Mammary epithelial cell (primary cell): ENCODE measurements at regions of chr22 and their contacts with region 1.

Region 1: GRCh38 chr22:36065775-36066559 is 37.3 kb upstream of the RBFOX2 start:
- DNase-seq: peak; percentile 85
- H3K4me3 ChIP-seq: peak overlapping the region; percentile 46 to 55 (median 49)
- H3K27ac ChIP-seq: peak overlapping the region; percentile 58
- H3K4me1 ChIP-seq: peaks cover 13% of the 10 kb centered on the region
- H3K27me3 ChIP-seq: no peaks in the 10 kb centered on the region
- CTCF ChIP-seq: peak in 1 of 2 donors; percentile 93

Region 2: GRCh38 chr22:35761037-35761436 is 304.9 kb before region 1 on chr22:
- CTCF ChIA-PET with region 1: interaction called, 36 read pairs
- dilution Hi-C with region 1: no loop called
- in situ Hi-C with region 1: no loop called
- intact Hi-C with region 1: no loop called
- DNase-seq: no peak
- H3K4me3 ChIP-seq: no peak overlapping the region
- H3K27ac ChIP-seq: no peak overlapping the region
- H3K4me1 ChIP-seq: no peaks in the 10 kb centered on the region
- H3K27me3 ChIP-seq: no peaks in the 10 kb centered on the region
- CTCF ChIP-seq: peak; percentile 8 to 31

Region 3: GRCh38 chr22:35930933-35931332 is 135.0 kb before region 1 on chr22:
- CTCF ChIA-PET with region 1: interaction called, 5 read pairs
- dilution Hi-C with region 1: no loop called
- in situ Hi-C with region 1: no loop called
- intact Hi-C with region 1: loop called (anchors 1 kb)
- DNase-seq: peak; percentile 44
- H3K4me3 ChIP-seq: no peak overlapping the region
- H3K27ac ChIP-seq: no peak overlapping the region
- H3K4me1 ChIP-seq: peaks cover 10% of the 10 kb centered on the region
- H3K27me3 ChIP-seq: no peaks in the 10 kb centered on the region
- CTCF ChIP-seq: peak; percentile 41 to 72

Region 4: GRCh38 chr22:36028646-36029405 is 37.1 kb before region 1 on chr22 and contains the start of gene RBFOX2:
- CTCF ChIA-PET with region 1: interaction called, 6 read pairs
- dilution Hi-C with region 1: no loop called
- in situ Hi-C with region 1: no loop called
- intact Hi-C with region 1: loop called (anchors 1 kb)
- DNase-seq: peak; percentile 96
- H3K4me3 ChIP-seq: peak within 1 kb of the TSS; percentile 84 to 92 (median 86)
- H3K27ac ChIP-seq: peak within 1 kb of the TSS; percentile 66
- H3K4me1 ChIP-seq: peaks cover 16% of the 10 kb centered on the region
- H3K27me3 ChIP-seq: no peaks in the 10 kb centered on the region
- CTCF ChIP-seq: no peak
- total RNA-seq, gene RBFOX2: 126 to 137 TPM

Region 5: DNA sequence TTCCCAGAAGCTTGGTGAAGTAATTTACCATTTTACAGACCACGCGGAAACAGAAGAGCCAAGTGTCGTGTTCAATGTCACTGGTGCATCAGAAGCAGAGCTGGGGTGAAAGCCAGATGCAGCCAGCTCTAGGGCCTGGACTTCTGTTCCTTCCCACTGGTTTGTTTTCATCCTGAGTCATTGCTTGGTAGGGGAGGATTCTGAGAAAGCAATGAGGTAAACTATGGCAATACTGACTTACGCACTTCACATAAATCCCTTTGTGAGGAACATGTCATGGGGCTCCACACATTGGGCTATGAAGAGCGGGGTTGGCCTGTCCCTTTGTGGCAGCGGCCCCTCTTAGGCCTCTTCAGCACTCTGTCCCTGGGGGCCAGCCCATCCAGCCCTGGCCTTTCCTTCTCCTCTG is 15.1 kb after region 1 on chr22:
- CTCF ChIA-PET with region 1: interaction called, 11 read pairs
- dilution Hi-C with region 1: no loop called
- in situ Hi-C with region 1: no loop called
- intact Hi-C with region 1: no loop called
- DNase-seq: peak; percentile 69
- H3K4me3 ChIP-seq: no peak overlapping the region
- H3K27ac ChIP-seq: no peak overlapping the region
- H3K4me1 ChIP-seq: peaks cover 14% of the 10 kb centered on the region
- H3K27me3 ChIP-seq: no peaks in the 10 kb centered on the region
- CTCF ChIP-seq: no peak

Region 6: DNA sequence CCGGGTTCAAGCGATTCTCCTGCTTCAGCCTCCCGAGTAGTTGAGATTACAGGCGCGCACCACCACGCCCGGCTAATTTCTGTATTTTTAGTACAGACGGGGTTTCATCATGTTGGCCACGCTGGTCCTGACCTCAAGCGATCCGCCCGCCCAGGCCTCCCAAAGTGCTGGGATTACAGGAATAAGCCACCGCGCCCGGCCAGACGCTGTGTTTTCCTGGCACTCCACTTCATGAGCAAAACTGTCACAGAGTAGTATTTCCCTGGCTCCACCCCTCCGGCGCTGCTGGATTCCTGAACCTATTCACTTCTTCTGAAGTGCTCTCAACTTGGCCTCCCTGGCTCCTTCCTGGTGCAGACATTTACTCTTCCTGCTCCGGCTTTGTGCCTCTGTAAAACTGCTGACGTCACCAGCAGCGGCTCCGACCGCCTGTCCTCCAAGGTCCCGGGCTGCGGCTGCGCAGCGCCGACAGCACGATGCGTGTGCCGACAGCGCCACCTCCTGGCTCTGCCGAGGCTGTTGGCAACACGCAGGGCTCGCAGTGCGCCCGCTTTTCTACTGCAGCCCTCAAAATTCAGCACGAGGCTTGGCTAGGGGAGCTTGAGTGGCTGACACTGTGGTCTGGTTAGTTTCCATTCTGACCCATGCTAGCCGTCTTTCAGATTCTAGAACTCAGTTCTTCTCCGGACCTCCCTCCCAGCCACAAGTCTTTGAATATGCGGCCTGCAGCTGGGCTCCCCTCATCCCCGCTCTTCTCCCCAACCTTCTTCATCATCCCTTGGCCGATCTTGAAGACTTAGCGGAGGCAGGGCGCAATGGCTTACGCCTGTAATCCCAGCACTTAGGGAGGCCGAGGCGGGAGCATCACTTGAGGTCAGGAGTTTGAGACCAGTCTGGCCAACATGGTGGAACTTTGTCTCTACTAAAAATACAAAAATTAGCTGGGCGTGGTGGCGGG is 58.0 kb after region 1 on chr22:
- CTCF ChIA-PET with region 1: interaction called, 8 read pairs
- dilution Hi-C with region 1: no loop called
- in situ Hi-C with region 1: no loop called
- intact Hi-C with region 1: loop called (anchors 1 kb)
- DNase-seq: peak; percentile 88
- H3K4me3 ChIP-seq: peak overlapping the region in 1 of 3 experiments; percentile 45
- H3K27ac ChIP-seq: peak overlapping the region; percentile 23
- H3K4me1 ChIP-seq: no peaks in the 10 kb centered on the region
- H3K27me3 ChIP-seq: no peaks in the 10 kb centered on the region
- CTCF ChIP-seq: peak; percentile 91 to 99

Region 7: GRCh38 chr22:36180038-36180880 is 114.3 kb after region 1 on chr22:
- CTCF ChIA-PET with region 1: no interaction called
- dilution Hi-C with region 1: no loop called
- in situ Hi-C with region 1: no loop called
- intact Hi-C with region 1: loop called (anchors 1 kb)
- DNase-seq: peak; percentile 35
- H3K4me3 ChIP-seq: no peak overlapping the region
- H3K27ac ChIP-seq: no peak overlapping the region
- H3K4me1 ChIP-seq: no peaks in the 10 kb centered on the region
- H3K27me3 ChIP-seq: peaks cover 3% of the 10 kb centered on the region
- CTCF ChIP-seq: peak; percentile 86 to 91

Region 8: DNA sequence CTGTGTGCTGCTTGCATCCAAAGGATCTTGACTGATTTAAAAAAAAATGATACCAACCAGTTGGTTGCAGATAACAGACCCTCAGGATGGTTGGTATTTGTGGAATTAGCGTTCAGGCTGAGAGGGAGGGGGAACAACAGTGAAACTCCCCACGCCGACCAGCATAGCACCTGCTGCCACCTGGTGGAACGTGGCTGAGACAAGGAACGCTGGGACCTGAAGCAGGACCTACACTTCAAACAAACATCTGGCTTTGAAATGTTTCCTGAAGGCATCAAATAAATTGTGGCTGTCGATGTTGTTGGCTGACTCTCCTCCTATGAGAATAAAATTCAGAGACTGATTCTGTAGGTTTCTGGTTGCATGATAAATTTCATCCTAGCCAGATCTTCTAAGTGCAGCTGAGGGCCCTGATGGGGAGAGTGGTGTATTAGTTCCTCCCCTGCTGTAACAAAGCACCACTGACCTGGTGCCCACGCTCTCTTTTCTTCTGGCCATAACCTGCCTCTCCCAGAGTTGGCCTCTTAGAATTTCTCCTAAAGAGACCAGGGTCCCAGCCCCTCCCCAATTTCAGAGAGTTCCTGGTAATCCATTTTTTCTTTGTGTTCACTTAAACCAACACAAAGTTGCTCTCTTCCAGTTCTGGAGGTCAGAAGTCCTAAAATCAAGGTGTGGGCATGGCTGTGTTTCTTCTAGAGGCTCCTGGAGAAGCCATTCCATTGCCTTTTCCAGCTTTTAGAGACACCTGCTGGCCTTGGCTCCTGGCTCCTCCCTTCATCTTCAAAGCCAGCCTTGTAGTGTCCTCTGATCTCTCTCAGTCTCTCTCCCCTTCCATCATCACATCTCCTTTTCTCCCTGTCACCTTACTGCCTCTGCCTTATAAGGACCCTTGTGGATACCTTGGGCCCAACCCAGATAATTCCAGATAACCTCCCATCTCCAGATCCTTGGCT is 156.1 kb after region 1 on chr22:
- CTCF ChIA-PET with region 1: no interaction called
- dilution Hi-C with region 1: no loop called
- in situ Hi-C with region 1: no loop called
- intact Hi-C with region 1: no loop called
- DNase-seq: peak; percentile 28
- H3K4me3 ChIP-seq: no peak overlapping the region
- H3K27ac ChIP-seq: no peak overlapping the region
- H3K4me1 ChIP-seq: no peaks in the 10 kb centered on the region
- H3K27me3 ChIP-seq: no peaks in the 10 kb centered on the region
- CTCF ChIP-seq: peak; percentile 76 to 83